ENCODE measurements at regions of chr9 and their contacts with region 1.

Region 1: DNA sequence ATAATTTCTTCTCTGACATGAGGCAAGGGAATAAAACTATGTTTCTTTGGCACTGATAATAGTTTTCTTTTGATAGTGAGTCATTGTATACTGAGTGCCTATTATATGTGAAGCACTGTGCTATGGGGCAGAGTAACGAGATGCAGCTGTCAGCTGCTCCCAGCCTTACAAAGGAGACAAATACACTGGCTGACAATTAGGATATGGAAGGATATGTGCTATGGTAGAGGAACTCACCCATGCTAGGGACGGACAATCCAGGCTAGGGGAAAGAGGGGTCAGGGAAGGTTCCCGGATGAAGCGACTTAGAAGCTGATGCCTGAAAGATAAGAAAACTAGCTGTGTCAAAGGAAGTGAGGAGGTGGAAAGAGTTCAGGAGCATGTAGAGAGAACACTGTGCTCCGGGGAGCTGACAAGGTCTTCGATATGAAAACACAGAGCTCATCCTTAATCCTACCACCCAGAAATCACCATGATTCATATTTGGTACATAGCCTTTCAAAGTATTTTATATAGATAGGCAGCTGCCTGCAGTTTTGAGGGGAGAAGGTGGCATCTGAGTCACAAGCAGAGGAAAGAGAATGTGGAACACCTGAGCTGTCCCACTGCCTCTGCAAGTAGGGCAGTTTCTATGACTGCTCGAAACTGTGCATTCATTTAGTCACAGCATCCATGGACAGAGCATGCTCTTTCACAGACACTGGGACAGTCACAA is 12.1 kb downstream of the BSPRY start:
- DNase-seq: no peak
- ATAC-seq: peak; percentile 75 to 81; a peak in 5 of 6 replicates
- H3K4me3 ChIP-seq: no peak overlapping the region
- H3K27ac ChIP-seq: no peak overlapping the region
- H3K4me1 ChIP-seq: peaks cover 13% of the 10 kb centered on the region
- CTCF ChIP-seq: no peak
- EP300 ChIP-seq: no peak
- POLR2A ChIP-seq: no peak
- RAD21 ChIP-seq: no peak

Region 2: DNA sequence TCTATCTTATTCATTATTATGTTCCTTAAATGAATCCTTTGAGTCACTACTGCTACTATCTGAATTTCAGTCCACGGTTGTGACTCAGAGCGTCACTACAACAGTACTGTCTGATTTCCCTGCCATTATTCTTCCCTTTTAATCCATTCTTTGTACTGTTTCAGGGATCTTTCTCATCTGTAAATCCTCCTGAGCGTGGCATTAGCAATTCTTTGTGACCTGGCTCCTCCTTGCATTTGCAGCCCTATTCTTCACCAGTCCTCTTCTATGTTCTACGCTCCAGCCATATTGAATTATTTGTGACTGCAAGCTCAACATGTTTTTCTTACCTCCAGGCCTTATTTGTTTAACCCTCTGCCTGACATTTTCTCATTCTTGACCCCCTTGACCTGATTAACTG is 80.1 kb before region 1 on chr9:
- CTCF ChIA-PET with region 1: no interaction called
- POLR2A ChIA-PET with region 1: no interaction called
- DNase-seq: no peak
- ATAC-seq: no peak
- H3K4me3 ChIP-seq: no peak overlapping the region
- H3K27ac ChIP-seq: no peak overlapping the region
- H3K4me1 ChIP-seq: peaks cover 20% of the 10 kb centered on the region; the same call in 2 of the 3 replicates
- CTCF ChIP-seq: no peak
- EP300 ChIP-seq: no peak
- POLR2A ChIP-seq: no peak
- RAD21 ChIP-seq: no peak

Region 3: DNA sequence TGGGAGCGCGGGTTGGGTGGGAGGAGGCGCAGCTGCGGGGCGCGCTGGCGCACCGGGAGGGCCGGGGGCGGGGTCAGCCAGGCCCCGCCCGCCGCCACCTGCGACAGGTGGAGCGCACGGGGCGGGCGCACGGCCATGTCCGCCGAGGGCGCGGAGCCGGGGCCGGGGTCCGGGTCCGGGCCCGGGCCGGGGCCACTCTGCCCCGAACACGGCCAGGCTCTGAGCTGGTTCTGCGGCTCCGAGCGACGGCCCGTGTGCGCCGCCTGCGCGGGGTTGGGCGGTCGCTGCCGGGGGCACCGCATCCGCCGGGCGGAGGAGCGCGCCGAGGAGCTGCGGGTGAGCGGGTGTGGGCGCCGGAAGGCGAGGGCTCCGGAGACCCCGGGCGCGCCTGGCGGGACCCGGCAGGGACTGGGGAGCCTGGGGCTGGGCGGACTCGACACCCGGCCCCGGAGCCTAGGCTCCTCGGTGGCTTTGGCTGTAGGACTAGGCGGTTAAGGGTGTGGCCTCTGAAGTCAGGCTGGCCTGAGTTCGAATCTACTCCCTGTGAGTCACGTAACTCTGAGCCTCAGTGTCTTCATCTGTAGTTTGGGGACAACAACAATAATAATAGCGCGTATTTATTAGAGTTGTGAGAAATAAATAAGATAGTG is 11.9 kb before region 1 on chr9 and contains the start of gene BSPRY:
- CTCF ChIA-PET with region 1: interaction called, 10 read pairs
- POLR2A ChIA-PET with region 1: no interaction called
- DNase-seq: peak in 1 of 2 experiments; percentile 22
- ATAC-seq: peak; percentile 55 to 69
- H3K4me3 ChIP-seq: peak within 1 kb of the TSS; percentile 74
- H3K27ac ChIP-seq: peak within 1 kb of the TSS in 1 of 2 experiments; percentile 74; a peak in 4 of 6 replicates
- H3K4me1 ChIP-seq: peaks cover 6% of the 10 kb centered on the region; the same call in 1 of the 3 replicates
- CTCF ChIP-seq: no peak
- EP300 ChIP-seq: no peak
- POLR2A ChIP-seq: no peak
- RAD21 ChIP-seq: no peak
- polyA plus RNA-seq, gene BSPRY: 0.06 and 0.07 TPM in 2 replicates

Region 4: DNA sequence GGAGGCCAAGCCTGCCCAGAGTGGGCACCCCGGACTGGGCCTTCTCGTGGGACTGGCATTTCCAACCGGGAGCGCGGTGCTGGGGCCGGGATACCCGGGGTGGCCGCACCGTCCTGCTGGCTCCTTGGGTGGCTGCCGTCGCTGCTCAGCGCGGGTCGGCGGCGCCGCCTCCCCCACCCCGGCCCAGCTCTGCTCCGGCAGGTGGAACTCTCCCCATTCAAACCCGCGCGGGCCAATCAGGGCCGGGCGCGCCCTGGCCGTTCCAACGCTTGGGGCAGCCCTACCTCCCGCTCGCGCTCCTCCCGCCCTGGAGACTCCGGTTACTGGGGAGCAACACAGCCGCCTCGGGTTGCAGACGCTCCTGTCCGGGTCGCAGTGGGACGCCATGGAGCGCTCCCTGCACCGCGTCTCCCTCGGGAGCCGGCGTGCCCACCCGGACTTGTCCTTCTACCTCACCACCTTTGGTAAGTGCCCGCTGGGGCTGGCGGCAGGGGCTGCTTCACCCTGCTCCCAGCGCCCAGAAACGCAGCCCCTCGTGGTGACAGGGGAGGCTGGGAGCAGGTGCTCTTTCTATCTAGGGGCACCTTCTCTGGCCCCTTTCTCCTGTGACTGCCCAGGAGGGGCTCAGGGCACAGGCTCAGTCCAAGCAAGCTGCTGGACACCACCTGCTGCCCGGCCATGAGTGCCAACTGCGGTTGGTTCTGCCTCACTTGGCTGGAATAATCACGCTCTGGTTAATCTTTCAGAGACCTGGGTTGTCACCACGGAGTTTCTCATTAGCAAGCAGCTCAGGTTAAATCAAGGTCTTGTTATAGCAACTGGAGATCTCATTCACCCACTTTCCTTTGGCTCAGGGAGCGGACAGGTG is 102.2 kb after region 1 on chr9 and contains the start of gene RGS3:
- CTCF ChIA-PET with region 1: no interaction called
- POLR2A ChIA-PET with region 1: no interaction called
- DNase-seq: peak; percentile 68 to 83
- ATAC-seq: peak; percentile 96 to 97
- H3K4me3 ChIP-seq: peak within 1 kb of the TSS; percentile 69
- H3K27ac ChIP-seq: peak within 1 kb of the TSS; percentile 77 to 89
- H3K4me1 ChIP-seq: peaks cover 25% of the 10 kb centered on the region
- CTCF ChIP-seq: no peak
- EP300 ChIP-seq: no peak
- POLR2A ChIP-seq: no peak
- RAD21 ChIP-seq: 0 out of 5 replicates have a peak, but pooled peaks of 1 of the 2 experiments have one; percentile 11
- polyA plus RNA-seq, gene RGS3: 19.6 and 21.5 TPM in 2 replicates